Activated CD4-positive, alpha-beta T cell treated with anti-CD3 and anti-CD28 coated beads for 36 hours (primary cell): ENCODE measurements at regions of chr12 and their contacts with region 1.

Region 1: GRCh38 chr12:101490286-101490920 is 15.3 kb downstream of the SPIC start:
- DNase-seq: peak; percentile 48
- ATAC-seq: peak; percentile 64
- H3K4me3 Mint-ChIP-seq: no peak overlapping the region
- H3K27ac Mint-ChIP-seq: no peak overlapping the region
- H3K4me1 Mint-ChIP-seq: no peaks in the 10 kb centered on the region
- H3K27me3 Mint-ChIP-seq: peaks cover 11% of the 10 kb centered on the region

Region 2: GRCh38 chr12:101564912-101565311 is 74.5 kb after region 1 on chr12:
- CTCF ChIA-PET with region 1: no interaction called
- POLR2A ChIA-PET with region 1: no interaction called
- intact Hi-C with region 1: loop called in 1 of 2 experiments (anchors 2 kb)
- DNase-seq: peak; percentile 6
- ATAC-seq: no peak
- H3K4me3 Mint-ChIP-seq: no peak overlapping the region
- H3K27ac Mint-ChIP-seq: no peak overlapping the region
- H3K4me1 Mint-ChIP-seq: peaks cover 14% of the 10 kb centered on the region
- H3K27me3 Mint-ChIP-seq: peaks cover 14% of the 10 kb centered on the region